ENCODE measurements at regions of chr10 and their contacts with region 1.

Region 1: GRCh38 chr10:81179805-81180452 is 642.2 kb downstream of the SH2D4B start:
- DNase-seq: peak; percentile 10
- H3K4me3 ChIP-seq: no peak overlapping the region
- H3K27ac ChIP-seq: no peak overlapping the region
- H3K4me1 ChIP-seq: no peaks in the 10 kb centered on the region
- H3K27me3 ChIP-seq: no peaks in the 10 kb centered on the region
- CTCF ChIP-seq: peak; percentile 31 to 40 (median 37)
- EP300 ChIP-seq: no peak
- POLR2A ChIP-seq: no peak

Region 2: GRCh38 chr10:80699602-80700039 is 480.3 kb before region 1 on chr10:
- in situ Hi-C with region 1: loop called in 1 of 4 experiments (anchors 25 kb)
- intact Hi-C with region 1: no loop called
- DNase-seq: peak; percentile 78
- H3K4me3 ChIP-seq: no peak overlapping the region
- H3K27ac ChIP-seq: no peak overlapping the region
- H3K4me1 ChIP-seq: peaks cover 0 to 17% (median 0%) of the 10 kb centered on the region in 4 donors
- H3K27me3 ChIP-seq: no peaks in the 10 kb centered on the region
- CTCF ChIP-seq: peak; percentile 57 to 81 (median 77)
- EP300 ChIP-seq: no peak
- POLR2A ChIP-seq: no peak